CD4-positive, alpha-beta memory T cell (primary cell): ENCODE measurements at regions of chr1 and their contacts with region 1.

Region 1: DNA sequence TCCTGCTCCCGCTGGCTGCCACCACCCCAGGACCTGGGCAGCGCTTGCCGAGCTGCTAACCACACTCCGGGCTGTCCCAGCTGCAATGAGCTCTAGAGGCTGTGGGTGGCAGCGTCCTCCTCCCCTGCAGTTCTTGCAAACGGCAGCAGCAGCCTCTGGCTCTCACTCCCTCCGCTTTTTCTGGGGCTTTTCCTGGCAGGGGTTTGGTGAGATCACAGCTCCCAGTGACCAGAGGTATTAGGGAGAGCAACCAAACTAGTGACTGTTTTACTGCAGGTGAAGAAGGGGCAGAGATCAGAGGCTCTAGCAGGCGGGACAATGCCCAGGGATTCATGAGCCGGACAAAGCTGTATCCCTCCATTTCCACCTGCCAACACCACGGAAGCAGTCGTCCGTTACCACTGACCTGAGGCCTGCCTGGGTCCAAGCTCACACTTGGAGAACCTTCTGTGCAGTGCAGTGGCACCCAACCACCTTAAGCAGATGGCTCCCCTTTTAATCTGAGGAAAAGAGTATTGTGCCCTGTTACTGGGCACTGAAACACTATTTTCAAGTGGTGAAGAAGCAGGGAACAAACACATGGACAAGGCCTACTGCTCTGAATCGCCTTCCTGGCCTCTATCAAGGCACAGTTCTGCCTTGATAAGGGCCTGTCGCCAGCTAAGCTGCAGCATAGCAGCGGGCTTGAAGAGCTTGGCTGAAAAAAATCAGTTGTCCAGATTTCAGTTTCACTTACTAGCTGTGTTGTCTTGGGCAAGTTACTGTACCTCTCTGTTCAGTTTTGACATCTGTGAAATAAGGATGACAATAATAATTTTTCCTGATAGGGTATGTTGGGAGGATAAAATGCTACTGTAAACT is at the start of gene F5:
- DNase-seq: peak; percentile 67 to 78 (median 72)
- H3K4me3 ChIP-seq: peak within 1 kb of the TSS; percentile 47 to 62
- H3K4me3 Mint-ChIP-seq: peak within 1 kb of the TSS; percentile 86 to 94 (median 89)
- H3K27ac ChIP-seq: peak within 1 kb of the TSS; percentile 36
- H3K27ac Mint-ChIP-seq: peak within 1 kb of the TSS; percentile 58 to 95 (median 74)
- H3K4me1 ChIP-seq: peaks cover 52% of the 10 kb centered on the region
- H3K4me1 Mint-ChIP-seq: peaks cover 15 to 51% (median 37%) of the 10 kb centered on the region in 4 donors
- H3K27me3 ChIP-seq: no peaks in the 10 kb centered on the region
- H3K27me3 Mint-ChIP-seq: peaks cover 2 to 11% of the 10 kb centered on the region in 2 donors
- total RNA-seq, gene F5: 4.9 to 6.1 TPM

Region 2: GRCh38 chr1:169427081-169427641 is 159.5 kb before region 1 on chr1 and contains the start of gene CCDC181:
- CTCF ChIA-PET with region 1: no interaction called
- POLR2A ChIA-PET with region 1: no interaction called
- intact Hi-C with region 1: no loop called
- DNase-seq: peak; percentile 14 to 50 (median 22)
- H3K4me3 ChIP-seq: peak within 1 kb of the TSS in 1 of 2 donors; percentile 34
- H3K4me3 Mint-ChIP-seq: peak within 1 kb of the TSS; percentile 83 to 93 (median 86)
- H3K27ac ChIP-seq: no peak within 1 kb of the TSS
- H3K27ac Mint-ChIP-seq: peak within 1 kb of the TSS in 1 of 7 donors; percentile 22
- H3K4me1 ChIP-seq: peaks cover 10% of the 10 kb centered on the region
- H3K4me1 Mint-ChIP-seq: peaks cover 3 to 8% (median 7%) of the 10 kb centered on the region in 4 donors
- H3K27me3 ChIP-seq: peaks cover 26% of the 10 kb centered on the region
- H3K27me3 Mint-ChIP-seq: peaks cover 46 to 54% of the 10 kb centered on the region in 2 donors
- total RNA-seq, gene CCDC181: 0.17 TPM in 1 of 2 experiments, not detected in the other

Region 3: GRCh38 chr1:169495046-169495775 is 91.4 kb before region 1 on chr1:
- CTCF ChIA-PET with region 1: no interaction called
- POLR2A ChIA-PET with region 1: no interaction called
- intact Hi-C with region 1: no loop called
- DNase-seq: no peak
- H3K4me3 ChIP-seq: no peak overlapping the region
- H3K4me3 Mint-ChIP-seq: no peak overlapping the region
- H3K27ac ChIP-seq: no peak overlapping the region
- H3K27ac Mint-ChIP-seq: no peak overlapping the region
- H3K4me1 ChIP-seq: no peaks in the 10 kb centered on the region
- H3K4me1 Mint-ChIP-seq: no peaks in the 10 kb centered on the region
- H3K27me3 ChIP-seq: no peaks in the 10 kb centered on the region
- H3K27me3 Mint-ChIP-seq: peaks cover 1 to 19% of the 10 kb centered on the region in 2 donors

Region 4: GRCh38 chr1:169557131-169557530 is 29.5 kb before region 1 on chr1:
- CTCF ChIA-PET with region 1: interaction called, 35 read pairs
- POLR2A ChIA-PET with region 1: no interaction called
- intact Hi-C with region 1: no loop called
- DNase-seq: no peak
- H3K4me3 ChIP-seq: no peak overlapping the region
- H3K4me3 Mint-ChIP-seq: no peak overlapping the region
- H3K27ac ChIP-seq: no peak overlapping the region
- H3K27ac Mint-ChIP-seq: no peak overlapping the region
- H3K4me1 ChIP-seq: no peaks in the 10 kb centered on the region
- H3K4me1 Mint-ChIP-seq: no peaks in the 10 kb centered on the region
- H3K27me3 ChIP-seq: no peaks in the 10 kb centered on the region
- H3K27me3 Mint-ChIP-seq: peaks cover 0 to 2% of the 10 kb centered on the region in 2 donors

Region 5: GRCh38 chr1:169576241-169576934 is 10.2 kb before region 1 on chr1:
- CTCF ChIA-PET with region 1: interaction called, 13 read pairs
- POLR2A ChIA-PET with region 1: interaction called, 4 read pairs
- intact Hi-C with region 1: no loop called
- DNase-seq: no peak
- H3K4me3 ChIP-seq: no peak overlapping the region
- H3K4me3 Mint-ChIP-seq: no peak overlapping the region
- H3K27ac ChIP-seq: no peak overlapping the region
- H3K27ac Mint-ChIP-seq: peak overlapping the region in 1 of 7 donors; percentile 36
- H3K4me1 ChIP-seq: peaks cover 15% of the 10 kb centered on the region
- H3K4me1 Mint-ChIP-seq: peaks cover 0 to 15% (median 12%) of the 10 kb centered on the region in 4 donors
- H3K27me3 ChIP-seq: no peaks in the 10 kb centered on the region
- H3K27me3 Mint-ChIP-seq: no peaks in the 10 kb centered on the region

Region 6: GRCh38 chr1:169615803-169616202 is 29.2 kb after region 1 on chr1:
- CTCF ChIA-PET with region 1: interaction called, 11 read pairs
- POLR2A ChIA-PET with region 1: no interaction called
- intact Hi-C with region 1: no loop called
- DNase-seq: no peak
- H3K4me3 ChIP-seq: no peak overlapping the region
- H3K4me3 Mint-ChIP-seq: no peak overlapping the region
- H3K27ac ChIP-seq: no peak overlapping the region
- H3K27ac Mint-ChIP-seq: no peak overlapping the region
- H3K4me1 ChIP-seq: no peaks in the 10 kb centered on the region
- H3K4me1 Mint-ChIP-seq: peaks cover 3 to 5% (median 4%) of the 10 kb centered on the region in 4 donors
- H3K27me3 ChIP-seq: no peaks in the 10 kb centered on the region
- H3K27me3 Mint-ChIP-seq: no peaks in the 10 kb centered on the region

Region 7: GRCh38 chr1:169809370-169810095 is 222.9 kb after region 1 on chr1:
- CTCF ChIA-PET with region 1: interaction called, 23 read pairs
- POLR2A ChIA-PET with region 1: no interaction called
- intact Hi-C with region 1: loop called (anchors 1 kb)
- DNase-seq: peak in 4 of 5 donors; percentile 31 to 37 (median 34)
- H3K4me3 ChIP-seq: no peak overlapping the region
- H3K4me3 Mint-ChIP-seq: no peak overlapping the region
- H3K27ac ChIP-seq: no peak overlapping the region
- H3K27ac Mint-ChIP-seq: peak overlapping the region in 1 of 7 donors; percentile 38
- H3K4me1 ChIP-seq: no peaks in the 10 kb centered on the region
- H3K4me1 Mint-ChIP-seq: peaks cover 0 to 1% (median 0%) of the 10 kb centered on the region in 4 donors
- H3K27me3 ChIP-seq: no peaks in the 10 kb centered on the region
- H3K27me3 Mint-ChIP-seq: no peaks in the 10 kb centered on the region